Heart right ventricle (tissue), 16 donors: ENCODE measurements at regions of chr1 and their contacts with region 1.

Region 1: GRCh38 chr1:8015036-8015808 is 10.9 kb downstream of the ERRFI1 start:
- DNase-seq: peak in 1 of 2 donors; percentile 78
- ATAC-seq: peak; percentile 52 to 82 (median 75)
- H3K4me3 ChIP-seq: peak overlapping the region in 1 of 10 donors; percentile 8
- H3K27ac ChIP-seq: peak overlapping the region in 8 of 10 donors; percentile 9 to 56 (median 38)
- H3K4me1 ChIP-seq: peaks cover 8 to 52% (median 36%) of the 10 kb centered on the region in 9 donors
- H3K27me3 ChIP-seq: peaks cover 0 to 6% (median 0%) of the 10 kb centered on the region in 7 donors
- CTCF ChIP-seq: peak; percentile 33 to 80 (median 66)

Region 2: GRCh38 chr1:7690496-7691182 is 324.6 kb before region 1 on chr1:
- intact Hi-C with region 1: no loop called
- DNase-seq: no peak
- ATAC-seq: no peak
- H3K4me3 ChIP-seq: no peak overlapping the region
- H3K27ac ChIP-seq: no peak overlapping the region
- H3K4me1 ChIP-seq: peaks cover 0 to 8% (median 0%) of the 10 kb centered on the region in 9 donors
- H3K27me3 ChIP-seq: peaks cover 0 to 6% (median 0%) of the 10 kb centered on the region in 7 donors
- CTCF ChIP-seq: no peak

Region 3: DNA sequence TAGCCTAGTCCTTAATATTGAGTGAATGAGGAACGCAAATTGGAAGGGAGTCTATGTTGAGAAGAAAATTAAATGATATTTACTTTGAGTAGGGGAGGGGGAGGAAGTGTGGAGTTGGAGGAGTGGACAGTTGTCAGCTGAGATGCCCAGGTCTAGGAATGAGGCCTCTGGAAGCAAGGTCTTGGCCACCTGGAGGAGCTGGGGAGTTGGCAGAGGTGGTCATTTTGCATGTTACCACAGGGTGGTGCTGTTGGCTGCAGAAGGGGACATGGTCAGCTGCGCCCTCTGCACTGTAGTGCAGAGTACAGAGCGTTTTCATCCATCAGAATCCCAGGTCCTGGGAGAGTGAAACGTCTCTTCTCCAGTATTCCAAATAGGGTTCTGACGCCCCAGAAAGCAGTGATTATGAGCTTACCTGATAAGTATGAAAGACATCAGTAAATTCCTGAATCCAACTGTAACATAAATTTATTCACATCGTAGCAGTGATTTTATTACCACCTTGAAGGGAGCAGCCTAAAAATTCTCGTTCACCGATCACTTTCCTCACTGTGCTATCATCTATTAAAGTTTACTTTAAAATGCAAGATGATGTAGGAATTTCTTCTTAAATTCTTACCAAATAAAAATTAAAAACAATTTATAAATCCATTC is 39.9 kb before region 1 on chr1:
- intact Hi-C with region 1: loop called in 4 of 10 experiments (anchors 5 kb)
- DNase-seq: peak; percentile 59 to 60
- ATAC-seq: peak; percentile 74 to 98 (median 94)
- H3K4me3 ChIP-seq: no peak overlapping the region
- H3K27ac ChIP-seq: no peak overlapping the region
- H3K4me1 ChIP-seq: peaks cover 0 to 16% (median 7%) of the 10 kb centered on the region in 9 donors
- H3K27me3 ChIP-seq: no peaks in the 10 kb centered on the region
- CTCF ChIP-seq: peak; percentile 69 to 89 (median 81)

Region 4: GRCh38 chr1:7983086-7983778 is 32.0 kb before region 1 on chr1:
- intact Hi-C with region 1: loop called in 4 of 10 experiments (anchors 5 kb)
- DNase-seq: peak in 1 of 2 donors; percentile 7
- ATAC-seq: peak in 6 of 8 donors; percentile 54 to 71 (median 68)
- H3K4me3 ChIP-seq: no peak overlapping the region
- H3K27ac ChIP-seq: peak overlapping the region in 1 of 10 donors; percentile 4
- H3K4me1 ChIP-seq: peaks cover 0 to 26% (median 15%) of the 10 kb centered on the region in 9 donors
- H3K27me3 ChIP-seq: no peaks in the 10 kb centered on the region
- CTCF ChIP-seq: no peak

Region 5: DNA sequence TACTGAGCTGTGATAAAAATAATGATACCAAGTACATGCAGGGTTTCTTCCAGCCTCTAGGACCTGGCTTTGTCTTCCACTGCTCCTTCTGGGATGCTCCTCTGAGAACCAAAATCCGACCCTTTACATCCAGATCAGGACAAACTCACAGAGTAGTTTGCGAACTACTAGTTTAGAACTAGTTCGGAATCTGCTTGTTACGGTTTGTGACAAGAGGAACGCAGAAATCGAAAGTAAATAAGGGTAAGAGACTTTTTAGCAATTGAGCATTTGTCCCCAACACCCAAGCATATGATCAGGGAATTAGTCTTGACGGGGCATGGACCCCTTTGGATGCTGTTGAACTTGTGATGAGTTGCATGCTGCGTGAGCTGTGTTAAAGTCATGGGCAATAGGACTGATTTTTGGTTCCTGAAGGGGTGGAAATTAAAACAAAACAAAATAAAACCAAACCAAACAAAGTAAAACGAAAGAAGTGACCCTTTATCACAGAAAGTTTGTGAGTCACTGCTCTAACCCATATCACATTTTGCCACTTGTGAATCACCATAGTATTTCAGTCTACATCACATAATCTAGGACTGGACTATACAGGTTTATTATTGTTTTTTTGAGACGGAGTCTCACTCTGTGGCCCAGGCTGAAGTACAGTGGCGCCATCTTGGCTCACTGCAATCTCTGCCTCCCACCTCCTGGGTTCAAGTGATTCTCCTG is 46.6 kb after region 1 on chr1:
- intact Hi-C with region 1: no loop called
- DNase-seq: no peak
- ATAC-seq: no peak
- H3K4me3 ChIP-seq: no peak overlapping the region
- H3K27ac ChIP-seq: peak overlapping the region in 4 of 10 donors; percentile 6 to 53 (median 27)
- H3K4me1 ChIP-seq: peaks cover 0 to 15% (median 0%) of the 10 kb centered on the region in 9 donors
- H3K27me3 ChIP-seq: peaks cover 0 to 12% (median 0%) of the 10 kb centered on the region in 7 donors
- CTCF ChIP-seq: no peak

Region 6: GRCh38 chr1:8077120-8077573 is 61.9 kb after region 1 on chr1:
- intact Hi-C with region 1: no loop called
- DNase-seq: peak; percentile 45 to 78
- ATAC-seq: peak; percentile 92 to 97 (median 94)
- H3K4me3 ChIP-seq: peak overlapping the region in 1 of 10 donors; percentile 5
- H3K27ac ChIP-seq: peak overlapping the region in 9 of 10 donors; percentile 5 to 79 (median 66)
- H3K4me1 ChIP-seq: peaks cover 0 to 40% (median 23%) of the 10 kb centered on the region in 9 donors
- H3K27me3 ChIP-seq: no peaks in the 10 kb centered on the region
- CTCF ChIP-seq: peak in 2 of 9 donors; percentile 3 to 16